ENCODE measurements at regions of chr3 and their contacts with region 1.

Region 1: DNA sequence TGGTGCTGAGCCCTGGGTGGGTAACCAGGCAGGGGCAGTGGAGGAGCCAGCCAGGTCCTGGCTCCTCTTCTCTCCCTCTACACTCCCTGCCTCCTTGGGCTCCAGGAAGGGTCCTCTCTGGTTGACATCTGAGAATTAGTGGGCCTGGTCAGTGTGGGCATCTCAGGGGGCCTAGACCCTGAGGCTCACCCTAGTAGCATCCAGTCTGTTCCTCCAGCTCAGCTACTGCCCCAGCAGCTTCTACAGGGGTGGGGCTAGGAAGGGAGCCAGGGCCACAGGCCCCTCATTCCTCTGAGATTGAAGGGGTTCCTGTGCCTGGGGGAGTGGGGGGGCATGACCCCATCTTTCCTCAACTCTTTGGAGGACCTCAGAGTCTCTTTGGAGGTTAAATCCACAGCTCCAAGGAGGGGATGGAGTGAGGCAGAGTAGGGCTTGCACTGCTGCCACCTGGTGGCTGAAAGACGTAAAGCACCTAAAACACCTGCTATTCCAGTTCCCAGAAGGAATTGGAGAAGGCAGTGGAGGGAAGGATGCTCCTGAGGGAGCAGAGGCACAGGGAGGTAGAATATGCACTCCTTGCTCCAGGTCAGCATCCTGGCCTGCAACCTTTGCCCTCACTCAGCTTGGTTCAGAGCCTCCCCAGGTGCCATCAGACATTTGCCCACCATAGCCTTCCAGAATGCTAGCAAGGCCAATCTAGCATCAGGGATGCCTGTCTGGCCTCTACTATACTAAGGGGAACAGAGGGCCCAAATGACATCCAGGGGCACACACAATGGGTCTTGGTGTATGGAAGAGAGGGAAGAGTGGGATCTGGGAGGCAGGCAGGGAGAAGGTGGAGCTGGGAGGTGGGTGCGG is 25.1 kb downstream of the C3orf18 start:
- DNase-seq: peak; percentile 48
- H3K4me3 ChIP-seq: no peak overlapping the region
- H3K27ac ChIP-seq: no peak overlapping the region
- H3K4me1 ChIP-seq: no peaks in the 10 kb centered on the region
- H3K27me3 ChIP-seq: no peaks in the 10 kb centered on the region
- CTCF ChIP-seq: peak; percentile 67

Region 2: GRCh38 chr3:50173685-50174516 is 368.5 kb before region 1 on chr3:
- CTCF ChIA-PET with region 1: no interaction called
- POLR2A ChIA-PET with region 1: no interaction called
- intact Hi-C with region 1: no loop called
- DNase-seq: no peak
- H3K4me3 ChIP-seq: no peak overlapping the region
- H3K27ac ChIP-seq: no peak overlapping the region
- H3K4me1 ChIP-seq: no peaks in the 10 kb centered on the region
- H3K27me3 ChIP-seq: no peaks in the 10 kb centered on the region
- CTCF ChIP-seq: no peak

Region 3: GRCh38 chr3:50350527-50351322 is 191.7 kb before region 1 on chr3 and contains the starts of genes CYB561D2 and NPRL2:
- CTCF ChIA-PET with region 1: interaction called, 3 read pairs
- POLR2A ChIA-PET with region 1: no interaction called
- intact Hi-C with region 1: loop called (anchors 5 kb)
- DNase-seq: peak; percentile 92
- H3K4me3 ChIP-seq: peak within 1 kb of the TSS; percentile 72
- H3K27ac ChIP-seq: peak within 1 kb of the TSS; percentile 92
- H3K4me1 ChIP-seq: peaks cover 8% of the 10 kb centered on the region
- H3K27me3 ChIP-seq: no peaks in the 10 kb centered on the region
- CTCF ChIP-seq: no peak
- total RNA-seq, gene CYB561D2: 7.9 and 8.2 TPM in 2 replicates
- total RNA-seq, gene NPRL2: 15.2 and 16.0 TPM in 2 replicates

Region 4: DNA sequence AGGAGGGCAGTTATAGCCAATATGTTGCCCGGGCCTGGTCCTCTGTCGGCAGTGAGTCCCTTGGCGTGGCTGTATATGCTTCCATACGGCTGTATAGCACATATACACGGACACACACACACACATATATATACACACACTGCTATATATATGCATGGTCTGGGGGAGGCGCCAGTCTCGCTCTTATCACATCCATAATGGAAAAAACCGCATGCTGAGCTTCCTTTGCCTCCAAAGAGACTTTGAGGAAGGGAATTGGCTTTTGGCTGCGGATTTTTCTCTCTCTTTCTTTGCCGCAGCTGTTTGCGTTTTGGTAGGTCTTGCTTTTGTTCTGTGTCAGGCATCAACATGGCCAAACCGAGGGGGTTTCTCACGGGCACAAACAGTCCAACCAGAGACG is 171.8 kb before region 1 on chr3:
- CTCF ChIA-PET with region 1: interaction called, 11 read pairs
- POLR2A ChIA-PET with region 1: no interaction called
- intact Hi-C with region 1: loop called (anchors 5 kb)
- DNase-seq: peak; percentile 62
- H3K4me3 ChIP-seq: no peak overlapping the region
- H3K27ac ChIP-seq: no peak overlapping the region
- H3K4me1 ChIP-seq: no peaks in the 10 kb centered on the region
- H3K27me3 ChIP-seq: no peaks in the 10 kb centered on the region
- CTCF ChIP-seq: peak; percentile 50

Region 5: DNA sequence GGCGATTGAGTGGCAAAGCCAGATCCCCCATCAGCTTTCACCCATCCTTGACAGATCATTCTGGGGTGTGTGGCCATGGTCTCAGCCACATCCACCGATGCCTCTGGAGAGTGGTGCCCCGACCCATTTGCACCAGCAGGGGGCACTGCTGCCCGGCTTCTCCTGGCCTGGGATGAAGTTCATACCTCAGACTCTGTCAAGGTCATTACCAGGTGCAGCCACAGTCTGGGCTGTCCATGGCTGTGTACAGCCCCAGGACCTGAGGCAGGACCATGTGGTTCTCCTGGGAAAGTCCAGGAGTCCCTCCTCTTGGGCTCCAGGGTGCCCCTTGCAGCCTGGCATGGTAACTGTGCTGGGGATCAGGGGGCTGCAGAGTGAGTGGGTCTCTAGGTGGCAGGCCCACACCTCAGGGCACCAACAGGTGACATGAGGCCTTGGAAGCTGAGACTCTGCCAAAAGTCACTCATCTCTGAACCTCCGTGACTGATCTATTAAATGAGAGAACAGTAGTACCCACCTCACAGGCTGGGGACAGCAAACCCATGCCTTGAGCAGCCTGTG is 106.2 kb before region 1 on chr3:
- CTCF ChIA-PET with region 1: interaction called, 3 read pairs
- POLR2A ChIA-PET with region 1: no interaction called
- intact Hi-C with region 1: loop called (anchors 2 kb)
- DNase-seq: peak; percentile 23
- H3K4me3 ChIP-seq: no peak overlapping the region
- H3K27ac ChIP-seq: no peak overlapping the region
- H3K4me1 ChIP-seq: no peaks in the 10 kb centered on the region
- H3K27me3 ChIP-seq: no peaks in the 10 kb centered on the region
- CTCF ChIP-seq: peak; percentile 69

Region 6: GRCh38 chr3:50554553-50554952 is 12.1 kb after region 1 on chr3:
- CTCF ChIA-PET with region 1: no interaction called
- POLR2A ChIA-PET with region 1: no interaction called
- intact Hi-C with region 1: no loop called
- DNase-seq: no peak
- H3K4me3 ChIP-seq: no peak overlapping the region
- H3K27ac ChIP-seq: no peak overlapping the region
- H3K4me1 ChIP-seq: no peaks in the 10 kb centered on the region
- H3K27me3 ChIP-seq: no peaks in the 10 kb centered on the region
- CTCF ChIP-seq: no peak